CD8-positive, alpha-beta T cell (primary cell): ENCODE measurements at regions of chr14 and their contacts with region 1.

Region 1: GRCh38 chr14:97978341-97978740 is 1181.2 kb downstream of the VRK1 start:
- DNase-seq: peak; percentile 46 to 88 (median 80)
- ATAC-seq: peak; percentile 76
- H3K4me3 ChIP-seq: peak overlapping the region; percentile 66 to 75
- H3K4me3 Mint-ChIP-seq: peak overlapping the region; percentile 82
- H3K27ac ChIP-seq: peak overlapping the region; percentile 73 to 77
- H3K27ac Mint-ChIP-seq: peak overlapping the region; percentile 88
- H3K4me1 ChIP-seq: peaks cover 37% of the 10 kb centered on the region
- H3K4me1 Mint-ChIP-seq: peaks cover 62% of the 10 kb centered on the region
- H3K27me3 ChIP-seq: no peaks in the 10 kb centered on the region
- H3K27me3 Mint-ChIP-seq: no peaks in the 10 kb centered on the region
- CTCF ChIP-seq: peak; percentile 53

Region 2: GRCh38 chr14:97458661-97459579 is 519.4 kb before region 1 on chr14:
- CTCF ChIA-PET with region 1: no interaction called
- POLR2A ChIA-PET with region 1: interaction called, 4 read pairs
- intact Hi-C with region 1: loop called in 1 of 2 experiments (anchors 5 kb)
- DNase-seq: peak; percentile 60 to 92 (median 84)
- ATAC-seq: peak; percentile 81
- H3K4me3 ChIP-seq: peak overlapping the region; percentile 53 to 62
- H3K4me3 Mint-ChIP-seq: peak overlapping the region; percentile 88
- H3K27ac ChIP-seq: peak overlapping the region; percentile 82 to 88
- H3K27ac Mint-ChIP-seq: peak overlapping the region; percentile 97
- H3K4me1 ChIP-seq: peaks cover 34% of the 10 kb centered on the region
- H3K4me1 Mint-ChIP-seq: peaks cover 75% of the 10 kb centered on the region
- H3K27me3 ChIP-seq: no peaks in the 10 kb centered on the region
- H3K27me3 Mint-ChIP-seq: no peaks in the 10 kb centered on the region
- CTCF ChIP-seq: no peak

Region 3: DNA sequence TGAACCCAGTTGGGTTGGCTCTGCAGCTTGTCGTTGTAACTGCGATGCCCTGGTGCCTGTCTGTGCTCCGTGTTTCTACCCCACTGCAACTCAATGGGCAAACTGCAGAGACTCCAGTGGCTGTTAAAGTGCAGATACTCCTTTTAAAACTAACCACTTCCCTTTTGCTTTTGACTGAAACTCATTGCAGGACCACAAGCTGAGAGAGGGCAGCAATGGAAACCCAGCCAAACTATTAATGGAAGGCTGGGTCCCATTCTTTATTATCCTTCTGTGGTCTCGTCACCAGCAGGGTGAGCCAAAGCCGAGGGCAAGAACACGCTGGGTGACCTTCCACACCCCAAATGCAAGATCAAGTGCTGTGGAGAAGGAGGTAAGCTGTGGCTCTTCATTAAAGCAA is 270.7 kb before region 1 on chr14:
- CTCF ChIA-PET with region 1: no interaction called
- POLR2A ChIA-PET with region 1: interaction called, 6 read pairs
- intact Hi-C with region 1: loop called in 1 of 2 experiments (anchors 10 kb)
- DNase-seq: peak in 6 of 9 experiments; percentile 26 to 68 (median 50)
- ATAC-seq: peak; percentile 13
- H3K4me3 ChIP-seq: peak overlapping the region; percentile 6 to 16
- H3K4me3 Mint-ChIP-seq: peak overlapping the region; percentile 63
- H3K27ac ChIP-seq: peak overlapping the region in 1 of 2 experiments; percentile 63
- H3K27ac Mint-ChIP-seq: peak overlapping the region; percentile 78
- H3K4me1 ChIP-seq: peaks cover 84% of the 10 kb centered on the region
- H3K4me1 Mint-ChIP-seq: peaks cover 97% of the 10 kb centered on the region
- H3K27me3 ChIP-seq: no peaks in the 10 kb centered on the region
- H3K27me3 Mint-ChIP-seq: no peaks in the 10 kb centered on the region
- CTCF ChIP-seq: no peak

Region 4: GRCh38 chr14:98064567-98064966 is 86.2 kb after region 1 on chr14:
- CTCF ChIA-PET with region 1: no interaction called
- POLR2A ChIA-PET with region 1: no interaction called
- intact Hi-C with region 1: no loop called
- DNase-seq: no peak
- ATAC-seq: no peak
- H3K4me3 ChIP-seq: no peak overlapping the region
- H3K4me3 Mint-ChIP-seq: no peak overlapping the region
- H3K27ac ChIP-seq: no peak overlapping the region
- H3K27ac Mint-ChIP-seq: no peak overlapping the region
- H3K4me1 ChIP-seq: no peaks in the 10 kb centered on the region
- H3K4me1 Mint-ChIP-seq: no peaks in the 10 kb centered on the region
- H3K27me3 ChIP-seq: no peaks in the 10 kb centered on the region
- H3K27me3 Mint-ChIP-seq: no peaks in the 10 kb centered on the region
- CTCF ChIP-seq: no peak

Region 5: DNA sequence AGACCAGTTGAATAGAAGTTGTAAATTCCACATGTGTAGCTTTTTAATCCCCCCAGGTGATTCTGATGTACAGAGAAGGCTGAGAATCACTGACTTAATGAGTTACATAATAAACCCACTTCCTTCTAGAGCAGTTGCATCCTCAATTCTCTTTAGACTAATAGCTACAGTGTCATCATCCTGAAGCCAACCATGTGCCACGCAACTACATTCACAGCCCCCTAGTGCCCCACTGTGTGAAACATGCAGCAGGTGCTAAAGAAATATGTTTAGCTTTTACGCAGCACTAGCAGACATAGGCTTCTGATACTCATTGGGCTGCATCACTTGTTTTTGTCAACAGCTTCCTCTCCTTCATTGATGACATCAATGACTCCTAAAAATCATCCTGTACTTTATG is 125.4 kb after region 1 on chr14:
- CTCF ChIA-PET with region 1: interaction called, 4 read pairs
- POLR2A ChIA-PET with region 1: interaction called, 9 read pairs
- intact Hi-C with region 1: loop called (anchors 1 to 2 kb)
- DNase-seq: peak; percentile 5 to 86 (median 42)
- ATAC-seq: peak; percentile 95
- H3K4me3 ChIP-seq: no peak overlapping the region
- H3K4me3 Mint-ChIP-seq: no peak overlapping the region
- H3K27ac ChIP-seq: no peak overlapping the region
- H3K27ac Mint-ChIP-seq: peak overlapping the region; percentile 83
- H3K4me1 ChIP-seq: peaks cover 22% of the 10 kb centered on the region
- H3K4me1 Mint-ChIP-seq: peaks cover 39% of the 10 kb centered on the region
- H3K27me3 ChIP-seq: no peaks in the 10 kb centered on the region
- H3K27me3 Mint-ChIP-seq: no peaks in the 10 kb centered on the region
- CTCF ChIP-seq: no peak

Region 6: DNA sequence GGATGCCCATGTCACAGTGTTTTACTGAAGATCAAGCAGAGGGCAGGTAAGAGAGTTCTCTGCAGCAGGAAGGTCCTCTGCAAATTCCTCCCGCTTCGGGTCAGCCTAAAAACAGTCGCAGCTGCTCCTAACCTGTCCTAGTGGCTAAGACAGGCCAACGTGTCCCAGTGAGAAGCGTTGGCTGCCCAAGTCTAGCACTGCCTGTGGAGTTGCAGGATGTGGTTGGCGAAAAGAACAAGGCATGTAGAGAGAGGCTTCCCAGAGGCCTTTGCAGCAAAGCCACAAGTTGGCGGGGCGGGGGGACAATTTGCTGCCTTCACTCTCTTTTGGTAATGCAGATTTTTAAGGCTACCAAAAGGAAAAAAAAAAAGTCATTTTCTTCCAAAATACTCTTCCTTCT is 953.6 kb after region 1 on chr14:
- CTCF ChIA-PET with region 1: no interaction called
- POLR2A ChIA-PET with region 1: no interaction called
- intact Hi-C with region 1: loop called (anchors 10 kb)
- DNase-seq: peak; percentile 57 to 89 (median 80)
- ATAC-seq: peak; percentile 96
- H3K4me3 ChIP-seq: peak overlapping the region; percentile 15 to 16
- H3K4me3 Mint-ChIP-seq: peak overlapping the region; percentile 74
- H3K27ac ChIP-seq: peak overlapping the region in 1 of 2 experiments; percentile 22
- H3K27ac Mint-ChIP-seq: peak overlapping the region; percentile 92
- H3K4me1 ChIP-seq: peaks cover 79% of the 10 kb centered on the region
- H3K4me1 Mint-ChIP-seq: peaks cover 93% of the 10 kb centered on the region
- H3K27me3 ChIP-seq: no peaks in the 10 kb centered on the region
- H3K27me3 Mint-ChIP-seq: no peaks in the 10 kb centered on the region
- CTCF ChIP-seq: no peak

Region 7: DNA sequence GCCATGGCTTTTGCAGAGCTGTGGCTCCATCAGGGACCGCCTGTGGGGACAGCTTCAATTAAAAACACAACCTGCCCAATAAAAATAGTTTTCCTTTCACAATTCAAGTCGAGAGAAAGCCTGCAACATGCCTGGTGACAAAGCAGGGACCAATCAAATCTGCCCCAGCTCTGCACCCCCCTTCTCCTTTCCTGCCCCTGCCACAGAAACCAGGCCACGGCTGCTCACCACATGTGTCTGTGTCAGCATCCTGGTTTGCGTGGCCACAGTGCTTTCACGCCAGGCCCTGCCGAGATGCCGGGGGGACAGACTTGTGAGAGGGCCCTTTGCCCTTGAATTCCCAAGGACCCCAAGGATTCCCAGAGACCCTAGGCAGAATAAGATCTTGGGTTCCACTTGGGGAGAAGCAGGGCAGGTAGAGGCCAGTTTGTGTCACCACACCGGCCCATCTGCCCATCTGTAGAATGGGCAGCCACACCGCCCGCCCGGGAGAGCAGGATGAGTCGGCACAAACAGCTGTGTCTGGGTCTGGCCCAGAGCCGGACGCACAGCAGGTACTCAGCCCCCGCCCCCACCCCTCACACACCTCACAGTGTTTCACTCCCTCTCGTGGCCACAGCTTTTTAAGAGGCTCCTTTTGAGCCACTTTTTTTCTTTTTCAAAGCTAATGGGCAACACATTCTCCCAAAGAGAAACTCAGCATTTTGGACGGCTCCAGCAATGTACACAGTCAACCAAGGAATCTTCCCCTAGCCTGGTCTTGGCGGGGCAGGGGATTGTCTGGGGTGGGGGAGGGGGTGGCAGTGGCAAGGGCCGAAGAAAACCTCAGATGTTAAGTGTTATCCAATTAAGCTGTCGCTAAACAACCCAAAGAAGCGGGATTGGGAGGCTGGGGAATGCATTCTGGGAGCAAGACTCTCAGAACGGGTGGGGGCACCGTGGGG is 1252.1 kb after region 1 on chr14:
- CTCF ChIA-PET with region 1: no interaction called
- POLR2A ChIA-PET with region 1: no interaction called
- intact Hi-C with region 1: loop called in 1 of 2 experiments (anchors 5 kb)
- DNase-seq: peak; percentile 73 to 95 (median 85)
- ATAC-seq: peak; percentile 62
- H3K4me3 ChIP-seq: peak overlapping the region; percentile 16 to 23
- H3K4me3 Mint-ChIP-seq: peak overlapping the region; percentile 75
- H3K27ac ChIP-seq: peak overlapping the region; percentile 60 to 96
- H3K27ac Mint-ChIP-seq: peak overlapping the region; percentile 99
- H3K4me1 ChIP-seq: peaks cover 99% of the 10 kb centered on the region
- H3K4me1 Mint-ChIP-seq: peaks cover 95% of the 10 kb centered on the region
- H3K27me3 ChIP-seq: no peaks in the 10 kb centered on the region
- H3K27me3 Mint-ChIP-seq: no peaks in the 10 kb centered on the region
- CTCF ChIP-seq: peak; percentile 46